Breast epithelium (tissue), 4 donors: ENCODE measurements at regions of chr18 and their contacts with region 1.

Region 1: GRCh38 chr18:49048396-49049020 is 97.7 kb upstream of the SMAD7 start:
- DNase-seq: no peak
- H3K4me3 ChIP-seq: no peak overlapping the region
- H3K27ac ChIP-seq: no peak overlapping the region
- H3K4me1 ChIP-seq: no peaks in the 10 kb centered on the region
- H3K27me3 ChIP-seq: no peaks in the 10 kb centered on the region
- CTCF ChIP-seq: no peak
- POLR2A ChIP-seq: no peak

Region 2: DNA sequence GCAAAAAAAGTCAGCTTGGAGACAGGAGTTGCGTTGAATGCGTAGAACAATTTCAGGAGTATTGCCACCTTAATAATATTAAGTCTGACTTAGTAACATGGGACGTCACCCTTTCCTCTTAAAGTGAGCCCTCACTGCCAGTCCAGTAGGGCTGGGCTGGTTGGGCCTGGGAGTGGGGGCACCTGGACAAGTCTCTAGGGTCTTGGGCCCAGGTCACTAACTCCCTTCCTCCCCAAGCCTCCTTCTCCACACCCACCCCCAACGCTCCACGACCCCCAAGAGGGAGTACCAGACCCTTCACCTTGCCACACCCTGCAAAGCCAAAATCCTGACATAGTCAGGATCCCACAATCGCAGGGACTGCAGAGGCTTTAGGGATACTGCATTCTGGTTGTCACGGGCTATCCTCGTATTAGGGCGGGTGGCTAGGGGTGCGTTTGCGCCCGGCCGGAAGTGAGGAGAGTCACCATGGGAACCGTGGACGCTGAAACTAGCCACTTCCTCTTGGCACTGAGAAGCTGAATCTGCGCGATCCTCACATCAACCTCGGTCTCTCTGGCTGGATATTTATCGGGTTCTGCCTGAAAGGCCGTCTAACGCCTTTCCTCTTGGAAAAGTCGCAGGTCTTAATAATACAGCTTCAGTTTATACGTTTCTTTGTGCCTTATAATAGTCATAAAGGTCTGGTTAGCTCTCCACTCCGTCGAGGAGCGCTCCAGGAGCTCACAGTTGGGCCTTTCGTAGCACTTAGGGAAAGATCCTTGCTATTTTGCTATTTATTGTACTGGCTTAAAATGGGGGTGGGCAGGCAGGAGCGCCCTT is 1249.3 kb after region 1 on chr18:
- intact Hi-C with region 1: loop called (anchors 5 kb)
- DNase-seq: peak; percentile 48 to 74
- H3K4me3 ChIP-seq: peak overlapping the region; percentile 23 to 70 (median 56)
- H3K27ac ChIP-seq: no peak overlapping the region
- H3K4me1 ChIP-seq: no peaks in the 10 kb centered on the region
- H3K27me3 ChIP-seq: peaks cover 0 to 17% of the 10 kb centered on the region in 2 donors
- CTCF ChIP-seq: no peak
- POLR2A ChIP-seq: no peak

Region 3: GRCh38 chr18:50397023-50397422 is 1348.5 kb after region 1 on chr18:
- intact Hi-C with region 1: no loop called
- DNase-seq: no peak
- H3K4me3 ChIP-seq: no peak overlapping the region
- H3K27ac ChIP-seq: no peak overlapping the region
- H3K4me1 ChIP-seq: no peaks in the 10 kb centered on the region
- H3K27me3 ChIP-seq: peaks cover 0 to 8% of the 10 kb centered on the region in 2 donors
- CTCF ChIP-seq: no peak
- POLR2A ChIP-seq: no peak